ENCODE measurements at regions of chr1 and their contacts with region 1.

Region 1: DNA sequence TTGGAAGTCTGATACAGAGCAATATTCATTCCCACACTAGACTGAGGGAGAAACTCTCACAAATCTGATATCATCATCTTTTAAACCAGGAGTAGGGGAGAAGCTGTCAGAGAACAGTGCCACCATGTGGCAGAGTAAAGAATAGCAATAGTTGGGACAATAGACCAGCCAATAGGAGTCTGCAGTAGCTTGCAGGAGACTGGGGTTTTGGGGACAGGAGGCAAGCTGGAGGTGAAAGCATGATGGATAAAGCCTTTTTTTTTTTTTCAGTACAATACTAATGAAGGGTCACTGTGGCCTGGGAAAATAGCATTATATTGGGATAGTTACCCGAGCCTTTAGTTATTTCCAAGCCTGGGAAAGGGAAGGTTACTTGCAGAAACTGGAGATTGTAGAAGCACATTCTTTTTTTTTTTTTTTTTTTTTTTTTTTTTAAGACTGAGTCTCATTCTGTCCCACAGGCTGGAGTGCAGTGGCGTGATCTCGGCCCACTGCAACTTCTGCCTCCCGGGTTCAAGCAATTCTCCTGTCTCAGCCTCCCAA is 120.7 kb downstream of the S1PR1 start:
- DNase-seq: peak; percentile 85
- H3K4me3 Mint-ChIP-seq: no peak overlapping the region
- H3K27ac Mint-ChIP-seq: no peak overlapping the region
- H3K4me1 Mint-ChIP-seq: peaks cover 7% of the 10 kb centered on the region
- H3K27me3 Mint-ChIP-seq: no peaks in the 10 kb centered on the region

Region 2: DNA sequence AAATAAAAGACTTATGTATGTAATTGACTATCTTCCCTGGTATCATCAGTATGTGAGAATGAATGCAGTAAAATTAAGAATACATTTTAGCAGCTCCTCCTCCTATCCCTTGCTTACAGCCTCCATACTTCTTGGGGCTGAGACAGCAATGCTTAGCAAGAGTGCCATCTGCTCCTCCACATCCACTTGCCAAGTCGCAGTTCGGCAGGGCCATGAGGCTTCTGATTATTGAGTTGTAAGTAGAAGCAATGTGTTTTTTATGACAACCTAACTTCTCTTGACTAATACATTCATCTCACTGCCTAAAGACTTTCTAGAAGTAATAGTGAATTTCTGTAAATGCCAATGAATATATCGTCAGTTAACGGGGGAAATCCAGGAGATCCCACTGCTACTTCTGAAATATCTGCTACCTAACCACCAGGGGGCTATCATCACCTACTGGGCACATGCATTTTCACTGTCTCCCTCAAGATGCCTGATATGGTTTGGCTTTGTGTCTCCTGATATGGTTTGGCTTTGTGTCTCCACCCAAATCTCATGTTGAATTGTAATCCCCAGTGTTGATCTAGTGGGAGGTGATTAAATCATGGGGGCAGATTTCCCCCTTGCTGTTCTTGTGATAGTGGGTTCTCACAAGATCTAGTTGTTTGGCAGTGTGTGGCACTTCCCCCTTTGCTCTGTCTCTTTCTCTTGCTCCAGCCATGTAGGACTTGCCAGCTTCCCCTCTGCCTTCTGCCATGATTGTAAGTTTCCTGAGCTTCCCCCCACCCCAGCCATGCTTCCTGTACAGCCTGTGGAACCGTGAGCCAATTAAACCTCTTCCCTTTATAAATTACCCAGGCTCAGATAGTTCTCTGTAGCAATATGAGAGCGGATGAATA is 522.5 kb before region 1 on chr1:
- CTCF ChIA-PET with region 1: no interaction called
- intact Hi-C with region 1: loop called (anchors 1 kb)
- DNase-seq: no peak
- H3K4me3 Mint-ChIP-seq: no peak overlapping the region
- H3K27ac Mint-ChIP-seq: no peak overlapping the region
- H3K4me1 Mint-ChIP-seq: no peaks in the 10 kb centered on the region
- H3K27me3 Mint-ChIP-seq: no peaks in the 10 kb centered on the region

Region 3: GRCh38 chr1:101136739-101137138 is 220.8 kb before region 1 on chr1:
- CTCF ChIA-PET with region 1: interaction called, 6 read pairs
- intact Hi-C with region 1: loop called (anchors 1 kb)
- DNase-seq: peak; percentile 61
- H3K4me3 Mint-ChIP-seq: no peak overlapping the region
- H3K27ac Mint-ChIP-seq: peak overlapping the region; percentile 62
- H3K4me1 Mint-ChIP-seq: peaks cover 67% of the 10 kb centered on the region
- H3K27me3 Mint-ChIP-seq: no peaks in the 10 kb centered on the region

Region 4: GRCh38 chr1:101298663-101299062 is 58.9 kb before region 1 on chr1:
- CTCF ChIA-PET with region 1: interaction called, 19 read pairs
- intact Hi-C with region 1: loop called (anchors 1 kb)
- DNase-seq: no peak
- H3K4me3 Mint-ChIP-seq: no peak overlapping the region
- H3K27ac Mint-ChIP-seq: no peak overlapping the region
- H3K4me1 Mint-ChIP-seq: peaks cover 30% of the 10 kb centered on the region
- H3K27me3 Mint-ChIP-seq: no peaks in the 10 kb centered on the region

Region 5: DNA sequence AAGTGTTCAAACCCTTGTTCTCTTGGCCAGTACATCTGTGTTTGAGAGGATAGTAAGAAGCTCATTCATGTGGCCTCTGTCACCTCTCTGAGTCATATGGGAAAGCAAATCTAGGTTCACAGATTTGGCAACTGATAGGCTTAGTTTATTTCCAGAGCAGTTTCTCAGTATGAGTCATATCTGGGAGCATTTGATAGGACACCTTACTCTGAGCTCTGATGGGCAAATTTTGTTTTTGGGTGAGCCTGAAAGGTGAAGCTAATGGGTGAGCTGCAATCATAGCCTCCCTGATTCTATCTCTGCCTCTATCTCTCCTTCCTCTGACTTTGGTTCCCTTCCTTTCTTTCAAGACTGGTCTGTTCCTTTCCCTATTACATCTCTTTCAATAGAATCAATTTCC is 13.7 kb after region 1 on chr1:
- CTCF ChIA-PET with region 1: interaction called, 20 read pairs
- intact Hi-C with region 1: no loop called
- DNase-seq: peak; percentile 26
- H3K4me3 Mint-ChIP-seq: no peak overlapping the region
- H3K27ac Mint-ChIP-seq: peak overlapping the region; percentile 18
- H3K4me1 Mint-ChIP-seq: peaks cover 11% of the 10 kb centered on the region
- H3K27me3 Mint-ChIP-seq: no peaks in the 10 kb centered on the region

Measured in activated naive CD4-positive, alpha-beta T cell treated with anti-CD3 and anti-CD28 coated beads for 36 hours (primary cell).